Activated naive CD4-positive, alpha-beta T cell treated with anti-CD3 and anti-CD28 coated beads for 36 hours (primary cell): ENCODE measurements at regions of chr11 and their contacts with region 1.

Region 1: DNA sequence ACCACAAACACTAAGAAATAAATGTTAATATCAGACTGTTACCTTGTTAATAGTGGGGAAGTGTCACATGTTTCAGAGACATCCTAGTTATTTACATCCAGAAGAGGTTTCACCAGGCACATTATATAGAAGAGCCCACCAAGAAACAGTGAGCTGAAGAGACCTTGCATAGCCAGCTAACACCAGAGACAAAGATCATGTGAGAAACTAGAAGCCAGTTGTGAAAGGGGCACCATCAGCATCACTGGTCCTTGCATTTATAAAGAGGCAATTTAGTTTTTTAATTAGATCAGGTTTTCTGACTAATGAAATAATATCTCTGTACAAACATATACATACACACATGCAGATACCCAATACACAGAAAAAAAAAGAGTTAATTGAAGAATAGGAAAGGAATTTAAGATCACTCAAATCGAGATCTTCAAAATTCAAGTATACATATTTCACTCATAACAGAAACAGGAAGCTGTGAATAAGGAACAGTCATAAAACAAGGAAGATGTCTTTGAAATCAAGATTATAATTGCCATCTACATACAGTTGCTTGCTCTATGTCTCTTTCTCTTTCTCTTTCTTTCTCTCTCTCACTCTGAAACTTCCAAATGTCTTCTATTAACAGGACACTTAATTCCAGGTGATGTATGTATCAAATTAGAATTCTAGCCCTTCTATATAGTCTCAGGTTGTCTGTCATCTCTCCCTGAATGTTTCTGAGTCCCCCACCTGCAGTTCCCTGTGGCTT is 348.7 kb downstream of the ETS1 start:
- DNase-seq: no peak
- H3K4me3 Mint-ChIP-seq: peak overlapping the region; percentile 41
- H3K27ac Mint-ChIP-seq: peak overlapping the region; percentile 55
- H3K4me1 Mint-ChIP-seq: peaks cover 31% of the 10 kb centered on the region
- H3K27me3 Mint-ChIP-seq: no peaks in the 10 kb centered on the region

Region 2: DNA sequence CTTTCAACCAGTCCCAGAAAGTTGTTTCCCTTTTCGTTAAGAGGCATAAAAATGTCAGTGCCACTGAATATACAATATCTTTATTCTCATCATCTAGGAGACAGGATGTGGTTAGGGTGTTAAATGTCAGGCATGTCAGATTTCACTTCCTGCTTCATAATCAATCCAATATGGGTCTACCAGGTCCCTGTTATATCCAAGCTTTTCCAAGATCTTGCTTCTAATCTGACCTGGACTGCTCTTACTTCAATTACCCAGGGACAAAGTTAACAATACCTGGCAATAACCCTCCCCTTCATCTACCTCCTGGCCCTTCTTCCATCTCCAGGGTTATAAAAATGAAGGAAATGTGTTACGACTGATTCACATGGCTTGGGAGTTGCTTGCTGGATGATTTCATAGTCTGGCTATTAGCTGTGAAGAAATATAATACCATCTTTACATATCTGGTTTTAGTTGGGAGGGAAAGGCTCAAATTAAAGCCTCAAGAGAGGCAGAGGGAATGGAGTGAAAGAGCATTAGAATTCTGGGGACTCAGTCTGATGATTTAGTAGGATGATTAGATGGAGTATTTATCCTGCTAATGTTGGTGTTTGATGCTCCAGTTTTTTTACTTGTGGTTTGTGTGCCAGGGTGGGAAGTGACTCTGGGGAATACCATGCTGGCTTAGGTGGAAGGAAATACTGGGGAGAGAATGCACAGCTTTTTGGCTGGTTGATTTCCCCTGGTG is 185.6 kb before region 1 on chr11:
- CTCF ChIA-PET with region 1: no interaction called
- intact Hi-C with region 1: loop called (anchors 1 kb)
- DNase-seq: no peak
- H3K4me3 Mint-ChIP-seq: peak overlapping the region; percentile 49
- H3K27ac Mint-ChIP-seq: peak overlapping the region; percentile 86
- H3K4me1 Mint-ChIP-seq: peaks cover 67% of the 10 kb centered on the region
- H3K27me3 Mint-ChIP-seq: no peaks in the 10 kb centered on the region

Region 3: DNA sequence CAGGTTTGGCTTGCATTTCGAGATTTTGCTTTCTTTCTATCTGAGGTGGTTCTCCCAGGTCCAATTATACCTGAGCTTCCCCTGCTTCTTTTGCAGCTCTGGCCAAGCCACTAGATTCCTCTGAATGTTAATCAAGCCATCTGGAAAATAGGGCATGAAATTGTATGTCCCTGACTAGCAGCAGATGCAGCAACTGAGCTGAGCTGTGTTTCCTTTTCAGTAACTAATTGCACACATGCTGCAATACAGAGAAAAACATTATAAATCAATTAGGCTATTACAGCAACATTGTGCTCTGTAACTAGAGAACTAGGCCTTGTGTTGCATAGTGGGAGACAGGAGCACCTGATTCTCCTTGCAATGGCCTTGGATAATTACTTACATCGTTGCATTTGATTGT is 59.7 kb before region 1 on chr11:
- CTCF ChIA-PET with region 1: no interaction called
- intact Hi-C with region 1: no loop called
- DNase-seq: no peak
- H3K4me3 Mint-ChIP-seq: no peak overlapping the region
- H3K27ac Mint-ChIP-seq: no peak overlapping the region
- H3K4me1 Mint-ChIP-seq: peaks cover 15% of the 10 kb centered on the region
- H3K27me3 Mint-ChIP-seq: no peaks in the 10 kb centered on the region

Region 4: DNA sequence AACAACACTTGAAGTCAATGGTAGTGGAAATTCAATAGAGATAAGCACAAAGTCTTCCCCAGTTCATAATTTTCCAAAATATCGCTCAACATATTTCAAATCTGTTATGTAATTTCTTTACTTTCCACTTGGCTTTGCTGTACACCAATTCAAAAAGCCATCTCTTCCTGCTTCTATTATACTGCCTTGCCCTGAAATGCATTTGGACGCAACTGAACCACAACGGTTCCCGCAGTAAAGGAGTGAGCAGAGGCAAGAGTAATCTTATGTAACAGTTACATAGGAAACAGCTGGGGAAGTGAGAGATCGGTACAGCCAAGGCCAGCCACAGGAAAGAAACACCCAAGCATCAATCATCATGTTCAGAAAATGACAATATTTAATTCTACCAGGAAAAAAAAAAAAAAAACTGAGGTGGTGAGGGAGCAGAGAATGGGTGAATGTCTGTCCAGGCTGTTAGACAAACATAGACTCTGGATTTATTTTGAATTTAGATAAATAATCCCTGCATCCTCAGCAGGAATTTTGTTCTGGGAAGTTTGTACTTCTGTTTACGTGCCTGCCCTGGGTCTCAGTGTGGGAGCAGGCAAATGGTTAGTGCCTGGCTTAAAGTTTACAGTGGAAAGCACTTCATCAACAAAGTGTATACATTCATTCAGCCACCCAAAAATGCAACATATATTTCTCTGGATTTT is 43.5 kb before region 1 on chr11:
- CTCF ChIA-PET with region 1: no interaction called
- intact Hi-C with region 1: loop called (anchors 1 kb)
- DNase-seq: peak; percentile 77
- H3K4me3 Mint-ChIP-seq: peak overlapping the region; percentile 6
- H3K27ac Mint-ChIP-seq: peak overlapping the region; percentile 32
- H3K4me1 Mint-ChIP-seq: peaks cover 42% of the 10 kb centered on the region
- H3K27me3 Mint-ChIP-seq: no peaks in the 10 kb centered on the region

Region 5: DNA sequence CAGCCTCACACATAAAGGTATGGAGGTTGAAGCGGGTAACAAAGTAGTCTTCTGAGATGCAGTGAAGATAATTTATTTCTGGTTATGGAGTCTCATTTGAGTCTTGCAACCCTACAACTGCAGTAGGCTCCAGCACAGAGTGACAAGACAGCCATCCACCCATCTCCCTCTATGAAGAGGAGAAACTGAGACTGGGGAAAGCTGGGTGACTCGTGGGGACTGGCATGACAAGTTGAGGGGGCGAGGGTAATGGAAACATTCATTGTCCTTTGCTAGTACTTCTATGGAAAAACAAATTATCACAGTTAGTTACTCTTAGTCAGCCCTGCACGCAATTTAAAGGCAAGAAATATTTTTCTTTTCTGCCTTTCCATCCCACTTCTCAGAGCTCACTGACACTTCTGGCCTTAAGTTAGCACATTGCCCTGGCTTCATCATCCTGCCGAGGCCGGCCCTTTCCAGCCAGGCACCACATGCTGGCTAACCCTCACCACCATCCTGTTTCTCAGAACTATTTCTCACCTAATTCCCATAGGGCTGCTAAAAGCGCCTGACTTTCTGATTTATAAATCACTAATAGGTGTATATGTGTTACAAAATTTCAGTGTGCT is 12.5 kb before region 1 on chr11:
- CTCF ChIA-PET with region 1: interaction called, 3 read pairs
- intact Hi-C with region 1: loop called (anchors 1 kb)
- DNase-seq: peak; percentile 37
- H3K4me3 Mint-ChIP-seq: no peak overlapping the region
- H3K27ac Mint-ChIP-seq: no peak overlapping the region
- H3K4me1 Mint-ChIP-seq: peaks cover 40% of the 10 kb centered on the region
- H3K27me3 Mint-ChIP-seq: no peaks in the 10 kb centered on the region